ENCODE measurements at regions of chr3 and their contacts with region 1.

Region 1: GRCh38 chr3:142549986-142550385 is 28.5 kb downstream of the ATR start:
- H3K4me3 Mint-ChIP-seq: no peak overlapping the region
- H3K27ac Mint-ChIP-seq: no peak overlapping the region
- H3K4me1 Mint-ChIP-seq: no peaks in the 10 kb centered on the region
- H3K27me3 Mint-ChIP-seq: no peaks in the 10 kb centered on the region

Region 2: DNA sequence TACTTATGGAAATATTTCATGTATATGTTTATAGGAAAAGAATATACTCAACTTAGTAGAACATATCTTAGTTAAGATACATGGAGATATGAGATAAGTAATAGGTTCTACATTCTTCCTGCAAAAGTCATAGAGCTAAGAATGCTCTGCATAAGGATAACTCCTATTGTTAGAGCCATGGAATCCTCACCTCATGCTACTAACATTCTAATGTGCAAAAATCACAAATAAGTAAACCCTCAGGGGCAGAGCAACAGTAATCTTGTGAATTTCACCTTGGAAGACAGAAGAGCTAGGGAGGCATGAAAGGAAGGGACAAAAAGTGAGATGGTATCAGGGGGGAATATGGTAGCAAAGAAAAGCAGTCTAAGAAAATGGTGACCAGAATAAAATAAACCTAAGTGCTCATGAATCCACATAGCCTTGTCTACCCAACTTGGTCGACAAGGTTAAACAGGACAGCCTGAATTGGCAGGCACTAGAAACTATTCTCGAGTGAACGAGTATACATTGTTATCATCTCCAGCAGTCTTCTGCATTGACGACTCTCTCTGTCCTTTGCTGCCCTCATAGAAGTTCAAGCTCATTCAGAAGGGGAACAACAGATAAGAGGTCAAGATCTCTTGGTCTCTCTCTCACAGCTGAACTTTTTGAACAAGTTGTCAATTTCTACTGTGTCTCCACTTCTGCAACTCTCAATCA is 154.9 kb before region 1 on chr3:
- intact Hi-C with region 1: loop called (anchors 10 kb)
- H3K4me3 Mint-ChIP-seq: no peak overlapping the region
- H3K27ac Mint-ChIP-seq: no peak overlapping the region
- H3K4me1 Mint-ChIP-seq: no peaks in the 10 kb centered on the region
- H3K27me3 Mint-ChIP-seq: no peaks in the 10 kb centered on the region